GM18951 (cell line): ENCODE measurements at regions of chr3 and their contacts with region 1.

Region 1: GRCh38 chr3:189967254-189967865 is 153.3 kb downstream of the P3H2 start:
- POLR2A ChIP-seq: no peak

Region 2: DNA sequence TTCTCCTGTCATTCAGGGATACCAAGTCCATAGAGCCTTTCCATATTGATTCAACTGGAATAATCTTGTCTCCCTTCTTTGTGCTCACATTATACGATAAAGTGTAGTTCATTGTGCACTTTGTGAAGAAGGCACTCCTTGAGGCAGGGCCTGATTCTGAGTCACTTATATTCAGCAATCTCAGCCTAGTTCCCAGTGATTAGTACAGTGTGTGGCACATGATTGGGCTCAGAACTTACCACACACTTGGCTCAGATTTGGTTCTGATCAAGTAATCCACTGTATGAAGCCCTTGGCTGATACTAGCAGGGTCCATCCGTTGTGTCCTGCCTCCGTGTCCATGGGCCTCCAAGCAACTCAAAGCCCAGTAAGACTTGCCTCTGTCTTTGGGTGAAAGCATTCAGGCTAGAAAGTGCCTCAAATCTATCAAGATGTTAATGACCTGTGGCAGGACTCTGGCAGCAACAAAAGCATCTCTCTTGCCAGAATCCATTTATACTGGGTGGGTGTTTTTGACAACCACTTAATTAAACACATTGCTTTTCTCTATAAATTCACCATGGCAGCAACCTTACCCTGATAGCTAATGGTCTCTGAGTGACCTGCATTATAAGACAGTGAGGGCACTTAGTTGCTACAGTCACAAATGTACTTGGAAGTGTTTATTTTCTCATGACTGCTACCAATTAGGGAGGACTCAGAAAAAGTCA is 744.3 kb before region 1 on chr3:
- in situ Hi-C with region 1: no loop called
- POLR2A ChIP-seq: no peak

Region 3: DNA sequence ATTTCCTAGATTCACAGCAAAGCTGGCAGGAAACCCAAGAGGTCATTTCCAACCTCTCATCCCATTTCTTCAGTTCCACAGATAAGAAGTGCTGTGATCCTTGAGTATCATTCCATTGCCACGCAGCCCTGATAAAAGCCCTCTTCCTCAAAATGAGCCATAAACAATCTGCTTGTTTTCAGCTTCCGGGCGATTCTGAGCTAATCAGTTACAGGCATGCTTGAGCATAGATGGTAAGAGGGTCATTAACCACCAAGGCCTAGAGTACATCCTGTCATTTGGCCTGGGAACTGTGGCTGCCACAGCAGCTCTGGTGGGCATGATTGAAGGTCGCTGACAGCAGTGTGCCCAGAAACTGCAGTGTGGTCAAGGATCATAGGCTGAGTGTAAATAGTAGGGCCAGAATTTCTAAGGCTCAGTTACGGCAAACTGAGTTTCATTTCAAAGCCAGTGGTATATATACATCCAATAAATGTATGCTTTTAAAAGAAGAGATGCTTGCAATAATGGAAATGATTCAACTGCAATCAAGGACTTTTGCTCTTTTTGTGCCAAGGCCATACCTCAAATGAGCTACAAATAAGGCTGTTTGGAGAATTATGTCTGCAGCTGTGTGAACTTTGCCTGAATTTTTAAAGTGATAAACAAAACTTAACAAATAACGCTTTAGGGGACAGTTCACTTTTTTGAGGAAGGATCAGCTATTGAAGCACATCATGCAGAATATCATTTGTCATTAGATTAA is 106.1 kb after region 1 on chr3:
- in situ Hi-C with region 1: no loop called
- POLR2A ChIP-seq: no peak

Region 4: DNA sequence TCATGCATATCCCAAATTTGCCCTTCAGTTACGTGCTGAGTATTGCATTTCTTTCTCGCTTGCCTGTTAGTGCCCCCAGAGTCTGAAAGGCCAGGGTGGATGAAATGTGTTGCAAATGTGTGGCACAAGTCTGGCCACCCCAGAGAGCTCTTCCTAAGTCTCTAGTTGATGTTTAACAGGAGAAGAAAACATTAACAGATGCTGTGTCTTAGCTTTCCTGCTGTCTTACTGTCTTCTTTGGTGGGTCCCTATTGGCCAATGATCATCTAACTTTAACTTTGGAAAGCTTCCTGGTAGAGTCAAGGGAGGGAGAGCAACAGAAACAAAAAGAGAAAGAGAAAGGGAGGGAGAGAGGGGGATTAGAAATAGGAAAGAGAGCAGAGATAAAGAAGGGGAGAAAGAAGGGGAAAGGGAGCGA is 230.0 kb after region 1 on chr3:
- in situ Hi-C with region 1: loop called (anchors 5 kb)
- POLR2A ChIP-seq: no peak